ENCODE measurements at regions of chr12 and their contacts with region 1.

Region 1: GRCh38 chr12:55996715-55997534 is at the start of gene SUOX:
- DNase-seq: peak; percentile 50
- H3K4me3 Mint-ChIP-seq: peak within 1 kb of the TSS; percentile 88
- H3K27ac Mint-ChIP-seq: peak within 1 kb of the TSS; percentile 64
- H3K4me1 Mint-ChIP-seq: peaks cover 30% of the 10 kb centered on the region
- H3K27me3 Mint-ChIP-seq: no peaks in the 10 kb centered on the region
- total RNA-seq, gene SUOX: 12.0 and 12.9 TPM in 2 replicates

Region 2: DNA sequence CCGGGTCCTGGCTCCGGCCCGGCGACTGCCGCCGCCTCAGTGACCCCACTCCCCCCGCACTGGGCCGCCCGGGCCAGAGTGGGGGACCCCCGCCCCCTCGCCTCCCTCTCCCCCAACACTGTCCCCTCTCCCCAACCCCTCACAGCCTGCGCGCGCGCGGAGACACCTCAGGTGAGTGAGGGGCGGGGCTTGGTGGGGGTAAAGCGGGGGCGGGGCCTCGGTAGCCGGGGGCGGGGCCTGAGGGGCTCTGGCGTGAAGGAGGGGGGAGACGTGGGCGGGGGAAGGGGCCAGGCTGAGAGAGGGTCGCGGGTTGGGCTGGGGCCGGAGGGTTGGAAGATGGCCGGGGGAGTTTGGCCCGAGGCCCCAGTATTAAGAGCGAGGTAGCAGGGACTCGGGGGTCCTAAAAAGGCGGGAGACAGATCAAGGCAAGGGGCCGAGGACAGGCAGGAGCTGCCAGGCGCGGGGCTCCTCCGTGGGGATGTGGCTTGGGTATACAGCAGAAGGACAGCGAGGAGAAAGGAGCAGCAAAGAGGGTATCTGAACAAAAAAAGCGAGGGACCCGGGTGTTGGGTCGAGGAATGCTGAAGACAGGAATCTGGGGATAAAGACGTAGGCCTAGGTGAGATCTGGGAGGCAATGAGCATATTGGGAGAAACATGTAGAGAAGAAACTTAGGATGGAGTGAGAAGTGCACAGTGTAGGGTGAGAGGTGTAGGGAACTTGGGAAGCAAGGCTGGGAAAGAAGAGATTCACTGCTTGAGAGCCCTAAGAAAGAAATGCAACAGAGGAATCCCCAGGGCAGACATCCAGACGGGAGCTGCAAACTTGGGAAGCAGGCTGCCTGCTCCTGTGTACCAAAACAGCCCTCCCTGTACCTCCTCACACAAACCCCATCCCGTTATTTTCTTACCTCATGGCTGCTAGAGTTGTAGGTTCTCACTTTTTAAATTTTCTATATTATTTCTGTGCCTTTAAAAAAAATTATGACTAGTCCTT is 10.9 kb after region 1 on chr12:
- intact Hi-C with region 1: loop called (anchors 1 kb)
- DNase-seq: peak; percentile 55
- H3K4me3 Mint-ChIP-seq: peak overlapping the region; percentile 92
- H3K27ac Mint-ChIP-seq: peak overlapping the region; percentile 88
- H3K4me1 Mint-ChIP-seq: peaks cover 32% of the 10 kb centered on the region
- H3K27me3 Mint-ChIP-seq: peaks cover 3% of the 10 kb centered on the region

Region 3: DNA sequence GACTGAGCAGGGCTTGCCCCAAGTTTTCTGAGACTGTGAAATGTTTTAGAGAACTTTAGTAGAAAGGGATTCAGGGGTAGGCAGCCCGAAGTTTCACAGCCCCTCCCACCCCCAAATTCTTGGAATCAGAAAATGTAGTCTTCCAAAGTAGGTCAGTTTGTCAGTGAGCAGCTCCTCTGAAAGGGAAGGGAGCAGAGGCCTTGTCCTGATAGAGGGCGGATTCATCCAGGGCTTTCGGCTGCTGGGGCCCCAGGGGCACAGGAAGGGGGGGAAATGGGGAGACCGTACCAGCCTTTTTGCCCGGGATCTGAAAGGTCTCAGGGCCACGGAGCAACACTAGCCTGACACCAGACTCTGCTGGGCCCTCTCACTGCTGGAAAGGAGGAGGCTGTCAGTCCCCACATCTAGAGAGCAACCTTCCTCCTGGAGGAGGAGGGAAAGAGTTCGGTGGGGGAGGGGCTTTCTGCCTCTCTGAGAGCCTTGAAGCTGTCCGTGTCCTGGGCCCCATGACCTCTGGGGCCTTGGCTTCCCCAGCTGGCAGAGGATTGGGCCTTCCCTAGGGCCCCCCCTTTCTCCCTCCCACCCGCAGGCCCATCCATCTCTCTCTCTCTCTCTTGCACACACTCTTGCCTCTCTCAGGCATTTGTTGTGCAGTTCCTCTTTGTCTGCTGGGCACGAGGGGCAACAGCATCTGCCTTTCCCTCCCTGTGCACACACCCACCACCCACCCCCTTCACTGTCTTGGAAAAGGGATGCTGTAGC is 23.7 kb after region 1 on chr12 and contains the start of gene IKZF4:
- intact Hi-C with region 1: loop called (anchors 1 kb)
- DNase-seq: no peak
- H3K4me3 Mint-ChIP-seq: peak within 1 kb of the TSS; percentile 97
- H3K27ac Mint-ChIP-seq: peak within 1 kb of the TSS; percentile 98
- H3K4me1 Mint-ChIP-seq: peaks cover 45% of the 10 kb centered on the region
- H3K27me3 Mint-ChIP-seq: no peaks in the 10 kb centered on the region
- total RNA-seq, gene IKZF4: 31.9 and 35.7 TPM in 2 replicates

Region 4: GRCh38 chr12:56029666-56030293 is 32.9 kb after region 1 on chr12:
- intact Hi-C with region 1: loop called (anchors 1 kb)
- DNase-seq: no peak
- H3K4me3 Mint-ChIP-seq: no peak overlapping the region
- H3K27ac Mint-ChIP-seq: peak overlapping the region; percentile 25
- H3K4me1 Mint-ChIP-seq: peaks cover 51% of the 10 kb centered on the region
- H3K27me3 Mint-ChIP-seq: no peaks in the 10 kb centered on the region